Cardiac septum (tissue), 1 donor: ENCODE measurements at regions of chr1 and their contacts with region 1.

Region 1: GRCh38 chr1:54950369-54951163 is 29.9 kb upstream of the TMEM61 start:
- DNase-seq: no peak

Region 2: DNA sequence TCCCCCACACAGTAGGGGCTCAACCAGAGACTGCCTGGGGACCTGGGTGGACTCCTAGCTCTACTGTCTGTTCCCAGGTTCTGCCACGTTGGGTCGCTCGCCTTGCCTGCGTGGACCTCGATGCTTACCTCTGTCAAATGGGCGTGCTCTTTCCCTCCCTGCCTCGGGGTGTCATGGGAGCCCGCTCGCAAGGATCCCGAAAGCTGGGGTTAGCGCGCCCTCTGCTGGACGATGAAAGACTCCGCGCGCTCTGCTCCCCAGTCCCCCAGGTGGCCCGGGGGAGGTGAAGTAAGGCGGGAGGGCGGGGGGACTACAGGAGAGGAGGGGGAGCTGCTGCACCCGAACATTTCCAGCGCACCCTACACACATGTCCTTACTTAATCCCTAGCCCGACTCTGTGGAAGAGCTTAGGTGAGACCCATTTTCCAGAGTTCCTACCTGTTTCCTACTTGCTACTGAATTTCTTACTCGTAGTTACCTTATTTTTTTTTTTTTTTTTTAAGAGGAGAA is 45.8 kb after region 1 on chr1:
- intact Hi-C with region 1: loop called (anchors 2 kb)
- DNase-seq: peak; percentile 88

Region 3: DNA sequence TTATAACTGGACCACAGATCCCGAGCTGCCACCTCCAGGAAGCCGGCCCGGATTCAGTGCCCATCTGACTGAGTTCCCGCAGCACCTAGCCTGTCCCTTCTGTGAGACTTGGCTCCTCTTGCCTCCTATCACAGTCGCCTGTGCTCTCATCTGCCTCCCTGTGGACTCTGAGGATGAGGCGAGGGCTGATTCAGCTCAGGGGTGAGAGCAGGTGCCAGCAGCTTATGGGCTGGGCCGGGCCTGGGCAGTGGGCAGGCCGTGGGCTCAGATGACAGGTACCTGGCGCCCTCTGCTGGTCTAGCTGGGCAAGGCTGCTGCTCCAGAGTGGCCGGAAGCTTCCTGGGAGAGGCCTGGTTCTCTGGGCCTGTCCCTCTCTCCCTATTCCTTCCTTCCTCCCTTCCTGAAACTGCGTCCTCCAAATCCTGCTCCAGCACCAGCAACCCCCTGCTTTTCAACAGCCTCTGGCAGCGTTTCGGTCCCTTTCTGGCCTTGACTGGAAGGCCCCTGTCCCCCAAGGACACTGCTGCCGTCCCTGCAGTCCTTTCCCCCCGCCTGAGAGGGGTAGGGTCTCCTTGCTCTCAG is 71.5 kb after region 1 on chr1:
- intact Hi-C with region 1: loop called (anchors 2 kb)
- DNase-seq: peak; percentile 86